Panc1 (cell line): ENCODE measurements at regions of chr19 and their contacts with region 1.

Region 1: GRCh38 chr19:30791088-30791487 is 418.9 kb downstream of the ZNF536 start:
- DNase-seq: no peak
- ATAC-seq: no peak
- H3K4me3 ChIP-seq: no peak overlapping the region
- H3K27ac ChIP-seq: no peak overlapping the region
- H3K4me1 ChIP-seq: no peaks in the 10 kb centered on the region
- H3K27me3 ChIP-seq: peaks cover 6% of the 10 kb centered on the region; the same call in 1 of the 2 replicates
- CTCF ChIP-seq: no peak

Region 2: GRCh38 chr19:30163363-30164062 is 627.6 kb before region 1 on chr19:
- CTCF ChIA-PET with region 1: interaction called, 15 read pairs
- POLR2A ChIA-PET with region 1: no interaction called
- in situ Hi-C with region 1: no loop called
- intact Hi-C with region 1: no loop called
- DNase-seq: no peak
- ATAC-seq: no peak
- H3K4me3 ChIP-seq: no peak overlapping the region
- H3K27ac ChIP-seq: no peak overlapping the region
- H3K4me1 ChIP-seq: no peaks in the 10 kb centered on the region
- H3K27me3 ChIP-seq: peaks cover 9% of the 10 kb centered on the region; the same call in 1 of the 2 replicates
- CTCF ChIP-seq: no peak

Region 3: DNA sequence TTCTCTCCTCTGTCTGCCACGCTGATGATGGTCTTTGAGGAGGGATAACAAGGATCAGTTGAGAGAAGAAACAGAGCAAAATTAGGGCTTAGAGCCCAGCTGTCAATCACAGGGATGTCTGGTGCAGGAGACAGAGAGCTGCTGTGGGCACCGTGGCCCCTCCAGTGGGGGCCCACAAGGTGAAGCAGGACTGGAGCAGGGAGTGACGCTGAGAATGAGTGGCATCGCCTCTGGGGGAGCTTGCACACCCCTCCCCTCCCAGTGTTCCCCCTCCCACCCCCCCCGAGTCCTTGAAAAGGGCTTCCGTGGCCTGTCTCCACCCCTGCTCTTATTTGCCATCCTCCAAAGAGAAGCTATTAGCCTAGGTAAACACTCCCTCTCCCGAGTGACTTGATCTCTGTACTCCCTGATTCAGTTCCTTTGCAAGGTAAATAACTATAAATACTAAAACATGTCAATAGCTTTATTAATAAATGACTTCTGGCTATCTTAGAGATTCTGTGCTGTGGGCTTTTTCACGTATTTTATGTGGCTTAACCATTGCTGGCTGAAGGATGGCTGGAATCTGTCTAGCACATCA is 21.1 kb after region 1 on chr19:
- CTCF ChIA-PET with region 1: no interaction called
- POLR2A ChIA-PET with region 1: no interaction called
- in situ Hi-C with region 1: no loop called
- intact Hi-C with region 1: no loop called
- DNase-seq: no peak
- ATAC-seq: no peak
- H3K4me3 ChIP-seq: no peak overlapping the region
- H3K27ac ChIP-seq: no peak overlapping the region
- H3K4me1 ChIP-seq: no peaks in the 10 kb centered on the region
- H3K27me3 ChIP-seq: peaks cover 3% of the 10 kb centered on the region; the same call in 1 of the 2 replicates
- CTCF ChIP-seq: no peak